CD4-positive, alpha-beta memory T cell (primary cell): ENCODE measurements at regions of chr13 and their contacts with region 1.

Region 1: GRCh38 chr13:49585220-49586157 is at the start of gene RCBTB1:
- DNase-seq: peak; percentile 66 to 77 (median 72)
- H3K4me3 ChIP-seq: peak within 1 kb of the TSS; percentile 64 to 76
- H3K4me3 Mint-ChIP-seq: peak within 1 kb of the TSS; percentile 88 to 99 (median 96)
- H3K27ac ChIP-seq: peak within 1 kb of the TSS; percentile 82
- H3K27ac Mint-ChIP-seq: peak within 1 kb of the TSS; percentile 80 to 96 (median 92)
- H3K4me1 ChIP-seq: peaks cover 21% of the 10 kb centered on the region
- H3K4me1 Mint-ChIP-seq: peaks cover 15 to 52% (median 41%) of the 10 kb centered on the region in 4 donors
- H3K27me3 ChIP-seq: no peaks in the 10 kb centered on the region
- H3K27me3 Mint-ChIP-seq: no peaks in the 10 kb centered on the region
- total RNA-seq, gene RCBTB1: 20.7 to 21.3 TPM

Region 2: GRCh38 chr13:49247643-49248621 is 337.6 kb before region 1 on chr13 and contains the start of gene CDADC1:
- CTCF ChIA-PET with region 1: no interaction called
- POLR2A ChIA-PET with region 1: interaction called, 5 read pairs
- intact Hi-C with region 1: loop called (anchors 5 kb)
- DNase-seq: peak; percentile 77 to 87 (median 81)
- H3K4me3 ChIP-seq: peak within 1 kb of the TSS; percentile 86 to 89
- H3K4me3 Mint-ChIP-seq: peak within 1 kb of the TSS; percentile 94 to 99 (median 97)
- H3K27ac ChIP-seq: peak within 1 kb of the TSS; percentile 89
- H3K27ac Mint-ChIP-seq: peak within 1 kb of the TSS; percentile 95 to 99 (median 97)
- H3K4me1 ChIP-seq: peaks cover 48% of the 10 kb centered on the region
- H3K4me1 Mint-ChIP-seq: peaks cover 24 to 51% (median 38%) of the 10 kb centered on the region in 4 donors
- H3K27me3 ChIP-seq: no peaks in the 10 kb centered on the region
- H3K27me3 Mint-ChIP-seq: peaks cover 0 to 4% of the 10 kb centered on the region in 2 donors
- total RNA-seq, gene CDADC1: 14.7 to 15.9 TPM

Region 3: DNA sequence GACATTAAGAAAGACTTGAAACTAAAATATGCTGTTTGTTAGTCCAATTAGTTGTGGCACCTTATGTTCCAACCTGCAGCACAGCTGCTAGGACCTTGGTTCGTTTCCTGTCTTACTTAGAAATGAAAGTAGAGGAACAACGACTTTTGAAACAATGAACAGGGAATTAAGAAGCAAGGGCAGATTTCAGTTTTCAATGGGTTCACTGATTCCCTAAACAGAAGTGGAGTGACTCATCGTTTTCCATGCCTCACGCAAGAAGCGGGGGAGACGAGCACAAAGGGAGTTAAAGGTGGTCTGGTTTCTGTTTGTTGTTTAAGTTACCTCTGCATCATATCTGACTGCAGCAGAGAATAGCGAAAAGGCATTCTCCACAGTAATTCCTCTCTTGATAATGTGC is 44.9 kb before region 1 on chr13:
- CTCF ChIA-PET with region 1: no interaction called
- POLR2A ChIA-PET with region 1: interaction called, 11 read pairs
- intact Hi-C with region 1: loop called (anchors 5 kb)
- DNase-seq: peak in 3 of 5 donors; percentile 9 to 14 (median 10)
- H3K4me3 ChIP-seq: peak overlapping the region; percentile 3 to 36
- H3K4me3 Mint-ChIP-seq: peak overlapping the region; percentile 76 to 90 (median 83)
- H3K27ac ChIP-seq: peak overlapping the region; percentile 29
- H3K27ac Mint-ChIP-seq: peak overlapping the region; percentile 39 to 95 (median 87)
- H3K4me1 ChIP-seq: peaks cover 20% of the 10 kb centered on the region
- H3K4me1 Mint-ChIP-seq: peaks cover 16 to 19% (median 18%) of the 10 kb centered on the region in 4 donors
- H3K27me3 ChIP-seq: no peaks in the 10 kb centered on the region
- H3K27me3 Mint-ChIP-seq: no peaks in the 10 kb centered on the region

Region 4: DNA sequence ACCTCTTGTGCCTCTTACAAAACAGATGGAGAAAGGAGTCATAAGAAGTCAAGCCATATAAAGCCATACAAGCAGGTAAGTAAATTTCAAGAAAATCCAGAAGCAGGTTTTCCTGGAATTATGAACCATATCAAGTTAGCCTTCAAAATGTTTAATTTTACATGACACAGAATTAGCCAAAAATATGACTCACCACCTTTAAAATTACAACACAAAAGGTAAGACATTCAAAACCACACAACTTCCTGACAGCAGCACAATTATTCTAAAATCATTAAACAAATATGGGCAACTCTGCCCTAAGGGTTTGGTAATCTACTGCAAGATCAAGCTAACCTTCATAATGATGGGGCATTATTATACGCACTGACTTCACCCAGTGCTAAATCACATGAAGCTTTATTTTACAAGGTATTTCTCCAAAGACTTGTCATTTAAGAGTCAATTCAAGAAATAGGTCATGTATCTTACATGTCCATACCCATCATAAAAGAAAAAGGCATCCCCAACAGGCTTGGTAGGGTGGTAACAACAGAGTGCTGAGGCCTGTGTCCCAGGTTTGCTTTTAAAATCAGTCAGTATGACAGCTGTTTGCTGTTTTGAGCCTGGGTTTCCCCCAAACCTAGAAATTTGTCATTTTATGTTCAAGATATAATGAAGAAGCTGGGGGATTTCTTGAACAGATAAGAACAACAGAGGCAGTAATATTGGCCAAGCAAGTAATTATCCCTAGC is 15.4 kb before region 1 on chr13:
- CTCF ChIA-PET with region 1: no interaction called
- POLR2A ChIA-PET with region 1: interaction called, 15 read pairs
- intact Hi-C with region 1: no loop called
- DNase-seq: peak; percentile 12 to 45 (median 24)
- H3K4me3 ChIP-seq: no peak overlapping the region
- H3K4me3 Mint-ChIP-seq: peak overlapping the region in 5 of 8 donors; percentile 35 to 55 (median 42)
- H3K27ac ChIP-seq: no peak overlapping the region
- H3K27ac Mint-ChIP-seq: peak overlapping the region; percentile 32 to 80 (median 60)
- H3K4me1 ChIP-seq: peaks cover 31% of the 10 kb centered on the region
- H3K4me1 Mint-ChIP-seq: peaks cover 22 to 49% (median 34%) of the 10 kb centered on the region in 4 donors
- H3K27me3 ChIP-seq: no peaks in the 10 kb centered on the region
- H3K27me3 Mint-ChIP-seq: no peaks in the 10 kb centered on the region

Region 5: GRCh38 chr13:49606747-49607648 is 21.5 kb after region 1 on chr13:
- CTCF ChIA-PET with region 1: interaction called, 14 read pairs
- POLR2A ChIA-PET with region 1: interaction called, 5 read pairs
- intact Hi-C with region 1: no loop called
- DNase-seq: peak; percentile 72 to 78 (median 77)
- H3K4me3 ChIP-seq: peak overlapping the region in 1 of 2 donors; percentile 13
- H3K4me3 Mint-ChIP-seq: peak overlapping the region; percentile 82 to 95 (median 89)
- H3K27ac ChIP-seq: no peak overlapping the region
- H3K27ac Mint-ChIP-seq: peak overlapping the region in 6 of 7 donors; percentile 22 to 95 (median 72)
- H3K4me1 ChIP-seq: no peaks in the 10 kb centered on the region
- H3K4me1 Mint-ChIP-seq: peaks cover 2 to 5% (median 3%) of the 10 kb centered on the region in 4 donors
- H3K27me3 ChIP-seq: no peaks in the 10 kb centered on the region
- H3K27me3 Mint-ChIP-seq: no peaks in the 10 kb centered on the region